ENCODE measurements at regions of chr5 and their contacts with region 1.

Region 1: DNA sequence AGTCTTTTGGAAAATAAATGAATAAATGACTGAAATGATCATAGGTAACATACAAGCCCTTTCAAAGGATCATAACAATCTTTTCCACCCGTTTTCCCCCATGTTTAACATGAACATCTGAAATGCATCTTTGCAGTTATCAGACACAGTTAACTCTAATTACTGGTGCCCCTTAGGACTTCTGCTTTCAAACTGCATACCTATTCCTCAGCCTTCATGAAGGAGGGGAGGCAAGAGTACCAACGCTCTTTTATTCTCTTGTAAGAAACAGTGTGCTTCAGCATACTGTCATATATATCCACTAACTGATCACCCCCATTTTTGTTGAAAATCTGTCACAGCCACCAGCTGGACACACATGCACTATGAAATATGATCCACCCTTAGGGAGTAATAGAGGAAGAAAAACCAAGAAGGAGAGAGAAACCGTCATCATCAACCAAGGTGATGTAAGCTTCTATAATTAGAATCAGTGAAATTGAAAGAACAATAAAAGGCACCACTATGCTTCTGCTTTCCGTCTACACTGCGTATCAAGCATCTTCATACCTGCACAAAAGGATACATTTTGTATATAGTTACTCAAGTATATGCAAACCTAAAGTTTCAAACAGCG is 98.7 kb downstream of the RAPGEF6 start:
- DNase-seq: peak; percentile 72 to 84 (median 80)
- H3K4me3 ChIP-seq: peak overlapping the region in 1 of 3 experiments; percentile 54
- H3K4me3 Mint-ChIP-seq: peak overlapping the region; percentile 7 to 68
- H3K27ac ChIP-seq: peak overlapping the region in 1 of 2 donors; percentile 71
- H3K27ac Mint-ChIP-seq: peak overlapping the region; percentile 82 to 91 (median 89)
- H3K4me1 ChIP-seq: peaks cover 23 to 31% of the 10 kb centered on the region in 2 donors
- H3K4me1 Mint-ChIP-seq: peaks cover 21% of the 10 kb centered on the region
- H3K27me3 ChIP-seq: no peaks in the 10 kb centered on the region
- H3K27me3 Mint-ChIP-seq: no peaks in the 10 kb centered on the region
- CTCF ChIP-seq: no peak

Region 2: DNA sequence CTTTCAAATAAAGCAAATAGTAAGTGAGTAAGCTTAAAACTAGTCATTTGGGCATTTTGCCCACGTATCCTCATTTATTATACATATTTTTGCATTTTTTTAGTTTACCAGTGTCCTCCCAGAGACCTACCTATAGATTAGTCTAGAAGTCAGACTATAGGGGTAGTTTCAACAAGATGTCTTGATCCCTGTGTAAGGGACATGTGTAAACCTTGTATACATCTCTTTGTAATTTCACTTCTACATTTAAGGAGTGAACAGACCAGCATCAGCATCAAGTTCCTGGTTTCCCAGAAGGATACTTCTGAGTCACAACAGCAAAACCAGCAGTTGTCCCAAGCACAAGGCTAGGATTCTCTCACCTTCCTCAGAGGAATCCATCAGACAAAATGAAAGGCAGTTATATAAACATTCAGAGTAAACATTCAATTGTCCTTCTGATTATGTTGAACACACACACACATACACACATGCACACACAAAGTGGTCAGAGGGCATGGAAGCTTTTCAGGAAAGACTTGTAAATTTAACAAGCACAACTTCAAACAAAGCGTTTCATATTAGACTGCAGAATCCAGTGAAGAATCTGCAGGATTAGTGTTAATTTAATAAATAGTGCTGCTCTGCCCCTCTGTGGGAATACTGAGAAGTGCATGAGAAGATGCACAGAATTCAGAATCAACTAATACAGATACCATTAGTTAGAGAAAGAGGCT is 426.6 kb before region 1 on chr5:
- intact Hi-C with region 1: no loop called
- DNase-seq: peak; percentile 18 to 50 (median 32)
- H3K4me3 ChIP-seq: no peak overlapping the region
- H3K4me3 Mint-ChIP-seq: no peak overlapping the region
- H3K27ac ChIP-seq: no peak overlapping the region
- H3K27ac Mint-ChIP-seq: no peak overlapping the region
- H3K4me1 ChIP-seq: peaks cover 21 to 27% of the 10 kb centered on the region in 2 donors
- H3K4me1 Mint-ChIP-seq: peaks cover 28% of the 10 kb centered on the region
- H3K27me3 ChIP-seq: no peaks in the 10 kb centered on the region
- H3K27me3 Mint-ChIP-seq: no peaks in the 10 kb centered on the region
- CTCF ChIP-seq: peak; percentile 80

Region 3: GRCh38 chr5:131488463-131488862 is 47.9 kb before region 1 on chr5:
- intact Hi-C with region 1: loop called in 1 of 2 experiments (anchors 10 kb)
- DNase-seq: peak; percentile 53 to 77 (median 76)
- H3K4me3 ChIP-seq: peak overlapping the region in 1 of 3 experiments; percentile 53
- H3K4me3 Mint-ChIP-seq: no peak overlapping the region
- H3K27ac ChIP-seq: peak overlapping the region in 1 of 2 donors; percentile 83
- H3K27ac Mint-ChIP-seq: peak overlapping the region; percentile 72 to 89 (median 80)
- H3K4me1 ChIP-seq: peaks cover 21 to 27% of the 10 kb centered on the region in 2 donors
- H3K4me1 Mint-ChIP-seq: peaks cover 18% of the 10 kb centered on the region
- H3K27me3 ChIP-seq: no peaks in the 10 kb centered on the region
- H3K27me3 Mint-ChIP-seq: no peaks in the 10 kb centered on the region
- CTCF ChIP-seq: no peak

Region 4: DNA sequence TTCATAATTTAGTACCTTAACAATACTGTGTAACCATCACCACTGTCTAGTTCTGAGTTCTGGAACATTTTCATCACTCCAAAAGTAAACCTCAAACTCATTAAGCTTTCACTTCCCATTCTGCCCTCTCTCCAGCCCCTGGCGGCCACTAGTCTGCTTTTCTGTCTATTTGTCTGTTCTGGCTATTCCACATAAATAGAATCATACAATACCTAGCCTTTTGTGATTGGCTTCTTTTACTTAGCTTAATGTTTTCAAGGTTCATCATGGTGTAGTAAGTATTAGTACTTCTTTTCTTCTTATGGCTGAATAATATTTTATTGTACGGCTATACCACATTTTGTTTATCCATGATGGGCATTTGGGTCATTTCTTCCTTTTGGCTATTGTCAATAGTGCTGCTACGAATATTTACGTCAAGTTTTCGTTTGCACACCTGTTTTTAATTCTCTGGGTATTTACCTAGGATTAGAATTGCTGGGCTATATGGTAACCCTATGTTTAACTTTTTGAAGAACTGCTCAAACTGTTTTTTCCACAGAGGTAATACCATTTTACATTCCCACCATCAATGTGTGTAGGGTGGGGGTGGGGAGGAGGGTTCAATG is 39.8 kb before region 1 on chr5:
- intact Hi-C with region 1: loop called in 1 of 2 experiments (anchors 5 kb)
- DNase-seq: peak; percentile 36 to 43 (median 37)
- H3K4me3 ChIP-seq: no peak overlapping the region
- H3K4me3 Mint-ChIP-seq: no peak overlapping the region
- H3K27ac ChIP-seq: peak overlapping the region in 1 of 2 donors; percentile 13
- H3K27ac Mint-ChIP-seq: peak overlapping the region in 2 of 7 donors; percentile 70 to 80
- H3K4me1 ChIP-seq: peaks cover 25 to 30% of the 10 kb centered on the region in 2 donors
- H3K4me1 Mint-ChIP-seq: peaks cover 18% of the 10 kb centered on the region
- H3K27me3 ChIP-seq: no peaks in the 10 kb centered on the region
- H3K27me3 Mint-ChIP-seq: no peaks in the 10 kb centered on the region
- CTCF ChIP-seq: peak; percentile 61

Measured in CD14-positive monocyte (primary cell).